ENCODE measurements at regions of chr9 and their contacts with region 1.

Region 1: DNA sequence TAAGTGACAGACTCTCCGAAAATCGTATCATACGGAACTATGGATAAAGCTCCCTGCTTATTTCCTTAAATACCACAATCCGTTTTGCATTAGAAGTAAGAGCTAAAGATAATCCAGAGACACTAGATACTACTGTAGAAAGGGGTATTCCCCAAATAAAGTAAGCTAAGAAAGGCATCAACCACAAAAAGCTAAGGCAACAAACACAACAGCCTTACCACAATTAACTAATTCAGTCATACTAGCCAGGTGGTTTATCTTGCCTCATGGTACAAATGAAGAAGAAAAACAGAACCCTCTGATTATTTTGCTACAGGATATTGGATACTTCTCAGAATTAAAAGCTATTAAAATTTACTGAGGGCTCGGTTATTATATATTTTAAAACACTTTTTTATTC is 14.1 kb downstream of the ERP44 start:
- DNase-seq: no peak
- H3K4me3 Mint-ChIP-seq: no peak overlapping the region
- H3K27ac Mint-ChIP-seq: no peak overlapping the region
- H3K4me1 Mint-ChIP-seq: peaks cover 73% of the 10 kb centered on the region
- H3K27me3 Mint-ChIP-seq: no peaks in the 10 kb centered on the region

Region 2: DNA sequence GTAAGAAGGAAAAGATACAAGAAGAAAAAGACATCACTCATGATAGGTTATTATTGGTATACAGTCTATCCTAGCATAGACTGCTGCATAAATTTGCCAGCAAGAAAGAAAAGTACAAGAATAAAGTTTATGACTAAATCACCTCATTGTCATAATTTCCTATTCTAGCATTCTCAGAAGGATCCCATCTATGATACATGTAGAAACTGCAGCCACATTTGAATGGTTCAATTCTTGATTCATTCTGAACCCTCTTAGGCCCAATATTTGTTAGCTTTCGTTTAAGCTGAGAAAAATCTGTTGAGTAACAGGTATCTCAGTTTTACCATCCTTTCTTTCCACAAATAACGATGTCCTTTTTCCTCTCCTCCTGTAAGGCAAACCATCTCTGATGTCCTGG is 35.6 kb after region 1 on chr9:
- CTCF ChIA-PET with region 1: no interaction called
- intact Hi-C with region 1: loop called (anchors 1 kb)
- DNase-seq: no peak
- H3K4me3 Mint-ChIP-seq: no peak overlapping the region
- H3K27ac Mint-ChIP-seq: no peak overlapping the region
- H3K4me1 Mint-ChIP-seq: peaks cover 16% of the 10 kb centered on the region
- H3K27me3 Mint-ChIP-seq: no peaks in the 10 kb centered on the region

Region 3: GRCh38 chr9:100196215-100196614 is 111.5 kb after region 1 on chr9:
- CTCF ChIA-PET with region 1: no interaction called
- intact Hi-C with region 1: no loop called
- DNase-seq: no peak
- H3K4me3 Mint-ChIP-seq: no peak overlapping the region
- H3K27ac Mint-ChIP-seq: no peak overlapping the region
- H3K4me1 Mint-ChIP-seq: no peaks in the 10 kb centered on the region
- H3K27me3 Mint-ChIP-seq: no peaks in the 10 kb centered on the region

Measured in activated naive CD4-positive, alpha-beta T cell treated with anti-CD3 and anti-CD28 coated beads for 36 hours (primary cell).